ENCODE measurements at regions of chr17 and their contacts with region 1.

Region 1: DNA sequence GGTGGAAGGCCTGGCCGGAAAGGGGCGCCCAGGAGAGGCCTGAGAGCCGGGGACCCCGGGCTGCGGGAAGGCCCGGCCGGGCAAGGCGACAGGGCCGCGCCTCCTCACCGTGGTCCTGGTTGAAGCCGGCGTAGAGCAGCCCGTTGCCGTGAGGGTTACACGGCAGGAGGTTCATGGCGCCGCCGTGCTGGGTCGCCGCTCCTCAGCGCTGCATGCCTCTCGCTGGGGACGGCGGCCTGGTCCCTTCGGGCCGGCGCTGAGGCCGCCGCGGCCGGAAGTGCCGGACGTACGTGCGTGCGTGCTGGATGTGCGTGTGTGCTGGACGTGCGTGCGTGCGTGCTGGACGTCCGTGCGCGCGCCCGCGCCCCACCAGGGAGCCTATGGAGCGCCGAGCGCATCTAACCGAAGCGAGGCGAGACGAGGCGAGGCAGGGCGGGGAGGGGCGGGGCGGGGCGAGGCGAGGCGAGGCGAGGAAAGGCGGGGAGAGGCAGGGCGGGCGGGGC is at the start of gene WDR45B:
- DNase-seq: peak; percentile 95 to 98 (median 96)
- ATAC-seq: peak; percentile 97
- H3K4me3 ChIP-seq: peak within 1 kb of the TSS; percentile 97
- H3K4me1 ChIP-seq: peaks cover 28% of the 10 kb centered on the region
- CTCF ChIP-seq: no peak
- total RNA-seq, gene WDR45B: 69.0 to 76.0 (median 74.4) TPM

Region 2: DNA sequence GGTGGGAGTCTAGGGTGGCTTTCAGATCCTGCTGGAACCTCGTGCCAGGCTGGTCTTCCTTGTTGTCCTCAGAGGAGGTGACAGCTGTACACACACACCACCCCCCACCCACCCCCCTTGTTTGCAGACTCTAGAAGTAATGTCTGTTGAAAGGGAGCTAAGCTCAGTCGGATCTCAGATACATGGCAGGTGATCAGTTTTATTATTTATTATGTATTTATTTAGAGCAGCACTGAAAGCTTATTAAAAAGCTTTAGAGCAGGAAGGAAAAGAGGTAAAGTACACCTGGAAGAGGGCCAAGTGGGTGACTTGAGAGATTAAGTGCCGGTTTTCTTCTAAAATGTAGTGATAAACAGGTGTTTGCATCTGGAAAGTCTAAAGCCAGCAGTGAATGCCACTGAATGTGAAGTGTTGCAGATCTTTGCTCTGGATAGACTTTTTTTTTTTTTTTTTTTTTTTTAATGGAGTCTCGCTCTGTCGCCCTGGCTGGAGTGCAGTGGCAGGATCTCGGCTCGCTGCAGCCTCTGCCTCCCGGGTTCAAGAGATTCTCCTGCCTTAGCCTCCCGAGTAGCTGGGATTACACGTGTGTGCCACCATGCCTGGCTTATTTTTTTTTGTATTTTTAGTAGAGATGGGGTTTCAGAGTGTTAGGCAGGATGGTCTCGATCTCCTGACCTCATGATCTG is 88.5 kb before region 1 on chr17:
- intact Hi-C with region 1: no loop called
- DNase-seq: peak in 1 of 3 donors; percentile 50
- ATAC-seq: peak; percentile 38
- H3K4me3 ChIP-seq: no peak overlapping the region
- H3K4me1 ChIP-seq: peaks cover 31% of the 10 kb centered on the region
- CTCF ChIP-seq: no peak

Region 3: DNA sequence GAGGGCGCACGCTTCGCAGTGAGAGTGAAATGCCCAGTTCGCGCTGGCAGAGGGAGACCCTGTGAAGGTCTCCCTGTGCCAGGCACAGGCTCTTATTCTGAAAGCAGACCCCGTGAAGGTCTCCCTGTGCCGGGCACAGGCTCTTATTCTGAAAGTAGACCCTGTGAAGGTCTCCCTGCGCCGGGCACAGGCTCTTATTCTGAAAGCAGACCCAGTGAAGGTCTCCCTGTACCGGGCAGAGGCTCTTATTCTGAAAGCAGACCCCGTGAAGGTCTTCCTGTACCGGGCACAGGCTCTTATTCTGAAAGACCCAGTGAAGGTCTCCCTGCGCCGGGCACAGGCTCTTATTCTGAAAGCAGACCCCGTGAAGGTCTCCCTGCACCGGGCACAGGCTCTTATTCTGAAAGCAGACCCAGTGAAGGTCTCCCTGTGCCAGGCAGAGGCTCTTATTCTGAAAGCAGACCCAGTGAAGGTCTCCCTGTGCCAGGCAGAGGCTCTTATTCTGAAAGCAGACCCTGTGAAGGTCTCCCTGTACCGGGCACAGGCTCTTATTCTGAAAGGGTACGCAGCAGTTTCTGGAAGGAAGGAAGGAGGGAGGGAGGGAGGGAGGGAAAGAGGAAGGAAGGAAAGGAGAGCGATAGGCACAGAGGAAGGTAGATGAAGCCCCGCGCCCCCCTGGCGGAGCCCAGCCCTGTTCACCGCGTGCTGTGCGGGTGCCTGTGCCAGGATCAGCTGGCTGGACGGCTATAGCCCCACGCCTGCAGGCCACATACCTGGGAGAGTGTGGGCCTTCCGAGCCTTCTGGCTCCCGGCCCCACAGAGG is 55.2 kb before region 1 on chr17:
- intact Hi-C with region 1: loop called in 1 of 2 experiments (anchors 10 kb)
- DNase-seq: peak; percentile 67 to 82 (median 72)
- ATAC-seq: peak; percentile 71
- H3K4me3 ChIP-seq: peak overlapping the region; percentile 25
- H3K4me1 ChIP-seq: peaks cover 53% of the 10 kb centered on the region
- CTCF ChIP-seq: no peak

Measured in mucosa of descending colon (tissue), 3 donors.